K562 (cell line): ENCODE measurements at regions of chr6 and their contacts with region 1.

Region 1: DNA sequence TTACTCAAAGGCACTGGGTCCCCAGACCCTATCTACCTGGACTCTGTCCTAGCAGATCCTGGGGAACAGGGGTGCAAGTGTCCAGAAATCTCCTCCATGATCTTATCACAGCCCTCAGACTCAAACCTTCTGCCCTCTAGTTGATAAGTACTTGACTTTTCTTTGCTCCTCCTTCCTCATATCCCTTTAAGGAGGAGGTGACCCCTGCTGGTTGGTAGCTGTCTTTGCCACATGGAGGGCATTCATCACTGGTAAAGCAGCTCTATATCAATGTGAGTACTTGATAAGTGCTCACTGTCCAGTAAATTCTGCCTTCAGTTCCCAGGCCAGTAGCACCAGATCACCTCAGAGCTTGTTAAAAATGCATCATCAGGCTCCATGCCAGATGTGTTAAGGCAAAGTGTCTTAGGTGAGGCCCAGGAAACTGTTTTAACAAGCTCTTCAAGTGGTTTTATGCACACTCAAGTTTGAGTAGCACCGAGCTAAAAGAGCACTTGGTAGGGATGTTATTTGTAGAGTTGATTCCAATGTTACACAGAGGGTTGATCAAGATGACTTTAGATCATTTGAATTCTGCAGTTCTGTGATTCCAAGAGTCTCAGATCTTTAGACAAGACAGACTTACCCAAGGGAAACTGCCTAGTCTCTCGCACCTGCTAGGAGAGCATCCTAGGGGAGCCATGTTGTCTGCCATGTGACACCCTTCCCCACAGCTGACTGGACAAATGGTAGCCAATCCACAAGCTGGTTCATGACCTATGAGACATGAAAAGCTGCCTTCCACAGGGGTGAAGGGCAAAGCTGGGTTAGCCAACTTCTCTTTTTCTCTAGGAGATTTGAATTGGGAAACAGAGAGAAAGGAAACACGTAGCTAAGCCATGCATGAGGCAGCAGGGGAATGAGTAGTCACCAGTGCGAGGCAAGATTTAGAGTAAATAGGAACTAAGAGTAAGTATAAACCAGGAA is 18.6 kb downstream of the TREML2 start:
- DNase-seq: peak; percentile 62 to 72 (median 67)
- ATAC-seq: peak; percentile 91
- H3K4me3 ChIP-seq: no peak overlapping the region
- H3K27ac ChIP-seq: no peak overlapping the region
- H3K4me1 ChIP-seq: peaks cover 0 to 4% of the 10 kb centered on the region in 2 experiments; a peak in 3 of 5 replicates
- H3K27me3 ChIP-seq: peaks cover 4 to 25% of the 10 kb centered on the region in 2 experiments; a peak in 4 of 5 replicates
- CTCF ChIP-seq: peak; percentile 77 to 83 (median 80)
- EP300 ChIP-seq: no peak; the same call in 1 of the 2 replicates
- POLR2A ChIP-seq: no peak
- RAD21 ChIP-seq: peak; percentile 72 to 78

Region 2: DNA sequence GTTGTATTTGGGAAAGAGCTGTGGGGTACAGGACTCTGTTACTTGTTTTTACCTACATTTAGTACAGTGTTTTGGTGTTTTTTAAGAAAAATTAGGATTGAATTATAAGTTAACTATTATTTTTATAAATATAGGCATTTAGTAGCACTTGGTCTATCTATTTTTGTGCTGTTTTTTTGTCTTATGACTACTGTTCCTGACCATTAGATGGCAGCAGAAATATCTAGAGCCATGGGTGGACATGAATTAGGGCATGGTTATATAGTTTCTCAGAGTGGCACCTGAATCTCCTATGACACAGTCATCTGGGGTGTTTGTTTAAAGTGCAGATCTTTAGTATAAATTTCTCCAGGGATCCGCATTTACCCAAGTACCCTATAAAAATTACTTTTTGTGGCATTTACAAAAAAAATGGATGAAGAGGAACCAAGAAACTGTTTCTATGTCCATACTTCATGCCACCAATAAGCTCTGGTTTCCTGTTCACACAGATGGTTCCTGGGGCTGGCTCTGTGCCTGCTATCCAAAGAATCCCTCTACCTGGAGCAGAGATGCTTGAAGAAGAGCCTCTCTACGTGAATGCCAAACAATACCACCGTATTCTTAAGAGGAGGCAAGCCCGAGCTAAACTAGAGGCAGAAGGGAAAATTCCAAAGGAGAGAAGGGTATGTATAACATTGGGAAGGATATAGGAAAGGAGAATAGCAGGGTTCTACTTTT is 89.8 kb before region 1 on chr6:
- CTCF ChIA-PET with region 1: no interaction called
- POLR2A ChIA-PET with region 1: no interaction called
- in situ Hi-C with region 1: no loop called
- intact Hi-C with region 1: loop called (anchors 5 kb)
- DNase-seq: peak in 3 of 4 experiments; percentile 20 to 27 (median 23)
- ATAC-seq: peak; percentile 73
- H3K4me3 ChIP-seq: no peak overlapping the region
- H3K27ac ChIP-seq: no peak overlapping the region
- H3K4me1 ChIP-seq: no peaks in the 10 kb centered on the region
- H3K27me3 ChIP-seq: no peaks in the 10 kb centered on the region
- CTCF ChIP-seq: peak; percentile 4 to 48 (median 32); a peak in 2 of 6 replicates
- EP300 ChIP-seq: no peak
- POLR2A ChIP-seq: no peak
- RAD21 ChIP-seq: peak; percentile 44 to 49; a peak in 3 of 4 replicates